ENCODE measurements at regions of chr5 and their contacts with region 1.

Region 1: GRCh38 chr5:159209438-159210305 is at the start of gene RNF145:
- DNase-seq: peak; percentile 90
- ATAC-seq: peak; percentile 85 to 87 (median 86)
- H3K4me3 ChIP-seq: peak within 1 kb of the TSS; percentile 86
- H3K27ac ChIP-seq: peak within 1 kb of the TSS; percentile 82
- H3K4me1 ChIP-seq: peaks cover 17% of the 10 kb centered on the region
- H3K27me3 ChIP-seq: no peaks in the 10 kb centered on the region
- CTCF ChIP-seq: no peak
- total RNA-seq, gene RNF145: 8.8 to 17.8 (median 13.8) TPM

Region 2: DNA sequence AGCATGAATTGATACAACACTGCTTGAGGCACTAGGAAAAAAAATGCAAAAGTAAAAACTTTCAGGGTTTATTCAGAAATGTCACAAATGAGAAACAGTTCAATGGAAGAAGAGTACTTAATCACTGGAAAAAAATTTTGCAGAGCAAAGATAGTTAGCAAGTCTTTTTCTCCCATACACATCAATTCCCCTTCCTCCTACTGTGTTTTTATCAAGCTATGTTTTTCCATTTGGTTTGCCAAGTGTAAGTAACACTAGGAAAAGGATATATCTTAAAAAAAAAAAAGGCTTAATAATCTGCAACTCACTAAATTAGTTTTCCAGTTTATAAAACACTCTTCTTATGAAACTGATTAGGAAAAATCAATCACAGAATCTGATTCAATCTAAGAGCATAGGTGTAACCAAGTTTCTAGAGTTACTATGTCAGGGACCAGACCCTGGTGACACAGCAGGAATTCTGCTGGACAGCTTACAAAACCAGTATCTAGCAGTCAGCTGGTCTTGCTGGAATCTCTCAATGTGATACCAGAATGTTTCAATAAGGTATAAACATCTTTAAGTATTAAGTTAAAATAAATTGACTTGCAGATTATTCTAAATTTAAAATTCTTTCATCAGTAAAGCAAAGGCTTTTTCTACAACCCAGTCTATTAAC is 35.0 kb before region 1 on chr5:
- intact Hi-C with region 1: loop called (anchors 5 kb)
- DNase-seq: no peak
- ATAC-seq: peak in 1 of 4 donors; percentile 65
- H3K4me3 ChIP-seq: no peak overlapping the region
- H3K27ac ChIP-seq: no peak overlapping the region
- H3K4me1 ChIP-seq: peaks cover 17% of the 10 kb centered on the region
- H3K27me3 ChIP-seq: no peaks in the 10 kb centered on the region
- CTCF ChIP-seq: no peak

Region 3: GRCh38 chr5:159262859-159263567 is 53.3 kb after region 1 on chr5 and contains the start of gene UBLCP1:
- intact Hi-C with region 1: loop called (anchors 2 to 5 kb)
- DNase-seq: peak; percentile 83 to 89
- ATAC-seq: peak; percentile 94 to 98 (median 96)
- H3K4me3 ChIP-seq: peak within 1 kb of the TSS; percentile 92
- H3K27ac ChIP-seq: peak within 1 kb of the TSS; percentile 93
- H3K4me1 ChIP-seq: peaks cover 16% of the 10 kb centered on the region
- H3K27me3 ChIP-seq: no peaks in the 10 kb centered on the region
- CTCF ChIP-seq: no peak
- total RNA-seq, gene UBLCP1: 8.3 to 16.4 (median 11.3) TPM

Region 4: DNA sequence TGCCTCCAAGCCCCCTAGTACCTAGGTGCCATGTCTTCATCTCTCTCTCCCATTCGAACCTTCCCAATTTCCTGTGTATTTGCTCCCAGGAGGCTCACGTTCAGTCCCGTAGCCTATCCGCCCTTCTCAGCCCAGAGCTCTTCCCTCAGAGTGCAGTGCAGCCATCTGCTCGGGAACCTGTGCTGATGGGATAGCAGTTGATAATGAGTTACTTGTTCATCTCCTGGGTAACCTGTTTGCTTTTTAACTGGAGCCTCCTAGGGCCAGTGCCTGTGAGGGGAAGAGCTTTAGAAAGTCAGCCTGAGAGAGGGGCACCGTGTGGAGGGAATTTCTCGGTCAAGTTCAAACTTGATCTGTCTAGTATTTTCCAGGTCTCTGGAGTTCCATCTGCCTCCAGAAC is 350.4 kb after region 1 on chr5:
- intact Hi-C with region 1: no loop called
- DNase-seq: no peak
- ATAC-seq: no peak
- H3K4me3 ChIP-seq: no peak overlapping the region
- H3K27ac ChIP-seq: no peak overlapping the region
- H3K4me1 ChIP-seq: no peaks in the 10 kb centered on the region
- H3K27me3 ChIP-seq: no peaks in the 10 kb centered on the region
- CTCF ChIP-seq: no peak